ENCODE measurements at regions of chr7 and their contacts with region 1.

Region 1: GRCh38 chr7:141563956-141564631 is 12.9 kb downstream of the AGK start:
- DNase-seq: no peak
- ATAC-seq: peak; percentile 75
- H3K4me3 ChIP-seq: no peak overlapping the region
- H3K27ac ChIP-seq: no peak overlapping the region
- H3K4me1 ChIP-seq: no peaks in the 10 kb centered on the region
- H3K27me3 ChIP-seq: no peaks in the 10 kb centered on the region
- CTCF ChIP-seq: no peak
- POLR2A ChIP-seq: no peak
- RAD21 ChIP-seq: no peak

Region 2: DNA sequence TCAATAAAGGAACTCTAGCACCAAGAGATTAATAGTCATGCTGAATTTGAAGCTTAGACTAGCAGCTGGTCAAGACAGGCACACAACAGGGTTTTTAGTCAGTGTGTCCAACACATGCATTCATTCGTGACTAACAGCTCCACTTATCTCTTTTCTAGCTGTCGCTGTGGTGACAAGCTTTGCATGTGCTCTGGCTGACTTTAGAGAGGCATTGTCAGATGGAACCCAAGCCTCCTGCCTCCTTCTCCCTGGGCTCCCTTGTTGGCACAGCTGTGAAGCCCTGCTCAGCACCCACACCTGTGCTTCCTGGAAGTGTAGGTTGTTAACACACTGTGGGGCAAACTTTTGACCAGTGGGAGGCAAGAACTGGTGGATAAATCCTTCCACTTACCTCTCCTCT is 22.7 kb before region 1 on chr7:
- CTCF ChIA-PET with region 1: no interaction called
- POLR2A ChIA-PET with region 1: no interaction called
- RAD21 ChIA-PET with region 1: no interaction called
- intact Hi-C with region 1: loop called (anchors 1 kb)
- DNase-seq: no peak
- ATAC-seq: no peak; the same call in 1 of the 2 replicates
- H3K4me3 ChIP-seq: no peak overlapping the region
- H3K27ac ChIP-seq: no peak overlapping the region
- H3K4me1 ChIP-seq: no peaks in the 10 kb centered on the region
- H3K27me3 ChIP-seq: peaks cover 34% of the 10 kb centered on the region
- CTCF ChIP-seq: no peak
- POLR2A ChIP-seq: no peak
- RAD21 ChIP-seq: no peak

Region 3: GRCh38 chr7:141785706-141786552 is 221.8 kb after region 1 on chr7:
- CTCF ChIA-PET with region 1: no interaction called
- POLR2A ChIA-PET with region 1: no interaction called
- RAD21 ChIA-PET with region 1: no interaction called
- intact Hi-C with region 1: no loop called
- DNase-seq: peak; percentile 36
- ATAC-seq: peak; percentile 86
- H3K4me3 ChIP-seq: no peak overlapping the region
- H3K27ac ChIP-seq: no peak overlapping the region
- H3K4me1 ChIP-seq: no peaks in the 10 kb centered on the region
- H3K27me3 ChIP-seq: no peaks in the 10 kb centered on the region
- CTCF ChIP-seq: peak; percentile 45 to 91 (median 80); a peak in 5 of 6 replicates
- POLR2A ChIP-seq: no peak
- RAD21 ChIP-seq: peak; percentile 60

Region 4: GRCh38 chr7:142231716-142232115 is 667.6 kb after region 1 on chr7:
- CTCF ChIA-PET with region 1: no interaction called
- POLR2A ChIA-PET with region 1: no interaction called
- RAD21 ChIA-PET with region 1: no interaction called
- intact Hi-C with region 1: no loop called
- DNase-seq: peak; percentile 46
- ATAC-seq: peak; percentile 100
- H3K4me3 ChIP-seq: no peak overlapping the region
- H3K27ac ChIP-seq: no peak overlapping the region
- H3K4me1 ChIP-seq: peaks cover 4 to 8% of the 10 kb centered on the region in 2 experiments; a peak in 3 of 4 replicates
- H3K27me3 ChIP-seq: peaks cover 8% of the 10 kb centered on the region; the same call in 1 of the 2 replicates
- CTCF ChIP-seq: peak in 2 of 3 experiments; percentile 53 to 59; a peak in 4 of 6 replicates
- POLR2A ChIP-seq: no peak
- RAD21 ChIP-seq: peak; percentile 33; the same call in 1 of the 2 replicates

Measured in HCT116 (cell line).